AG04450 (cell line): ENCODE measurements at regions of chr10 and their contacts with region 1.

Region 1: GRCh38 chr10:30857803-30858202 is 173.9 kb downstream of the ZNF438 start:
- DNase-seq: no peak
- H3K4me3 ChIP-seq: no peak overlapping the region
- H3K27ac ChIP-seq: peak overlapping the region; percentile 57
- H3K27me3 ChIP-seq: no peaks in the 10 kb centered on the region
- CTCF ChIP-seq: no peak

Region 2: GRCh38 chr10:31133628-31134302 is 276.0 kb after region 1 on chr10:
- CTCF ChIA-PET with region 1: interaction called, 10 read pairs
- POLR2A ChIA-PET with region 1: no interaction called
- DNase-seq: no peak
- H3K4me3 ChIP-seq: peak overlapping the region; percentile 25
- H3K27ac ChIP-seq: peak overlapping the region; percentile 98
- H3K27me3 ChIP-seq: no peaks in the 10 kb centered on the region
- CTCF ChIP-seq: no peak